HEK293T (cell line): ENCODE measurements at regions of chr3 and their contacts with region 1.

Region 1: GRCh38 chr3:136752422-136753325 is 496 bp upstream of the STAG1 start:
- DNase-seq: peak; percentile 91

Region 2: GRCh38 chr3:136390574-136390973 is 362.1 kb before region 1 on chr3:
- CTCF ChIA-PET with region 1: interaction called, 27 read pairs
- POLR2A ChIA-PET with region 1: interaction called, 17 read pairs
- DNase-seq: no peak

Region 3: GRCh38 chr3:136545664-136546268 is 206.9 kb before region 1 on chr3:
- CTCF ChIA-PET with region 1: interaction called, 15 read pairs
- POLR2A ChIA-PET with region 1: interaction called, 36 read pairs
- DNase-seq: no peak

Region 4: DNA sequence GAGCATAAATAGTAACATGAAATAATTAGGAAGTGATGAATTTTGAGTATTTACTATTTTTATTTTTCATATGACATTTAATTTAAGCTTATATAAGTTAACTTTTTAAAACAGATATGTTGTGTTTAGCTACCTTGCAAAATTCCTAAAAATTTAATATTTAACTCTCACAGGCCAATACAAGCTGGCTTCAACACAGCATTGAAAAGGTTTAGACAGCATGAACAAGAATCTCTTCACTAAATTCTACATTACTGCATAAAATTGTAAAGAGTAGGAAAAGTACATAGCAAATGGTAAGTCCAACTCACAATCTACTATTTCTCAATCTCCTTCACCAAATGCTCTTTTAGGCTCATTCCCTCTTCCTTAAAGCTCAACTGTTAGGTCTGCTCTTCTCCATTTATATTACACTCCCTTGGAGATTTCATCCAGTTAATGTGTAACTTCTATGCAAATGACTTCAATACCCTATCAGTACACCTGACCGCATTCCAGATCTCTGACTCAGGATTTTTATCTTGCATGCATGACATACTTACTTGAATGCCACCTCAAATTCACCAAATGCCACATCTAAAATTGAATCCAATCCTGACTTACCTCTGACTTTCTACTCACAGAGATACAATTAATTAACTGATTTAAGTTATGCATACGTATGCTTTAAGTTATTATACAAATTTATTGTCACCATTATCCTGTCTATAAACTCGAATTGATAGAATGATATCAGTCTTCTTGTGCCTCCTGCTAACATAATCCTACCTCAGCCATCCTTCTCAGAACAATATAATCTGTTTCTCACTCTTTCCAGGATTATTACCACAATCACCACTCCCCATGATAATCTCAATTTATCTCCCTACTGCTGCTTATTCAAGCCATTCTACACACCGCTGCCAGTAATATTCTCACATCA is 127.5 kb before region 1 on chr3:
- CTCF ChIA-PET with region 1: no interaction called
- POLR2A ChIA-PET with region 1: no interaction called
- DNase-seq: no peak

Region 5: DNA sequence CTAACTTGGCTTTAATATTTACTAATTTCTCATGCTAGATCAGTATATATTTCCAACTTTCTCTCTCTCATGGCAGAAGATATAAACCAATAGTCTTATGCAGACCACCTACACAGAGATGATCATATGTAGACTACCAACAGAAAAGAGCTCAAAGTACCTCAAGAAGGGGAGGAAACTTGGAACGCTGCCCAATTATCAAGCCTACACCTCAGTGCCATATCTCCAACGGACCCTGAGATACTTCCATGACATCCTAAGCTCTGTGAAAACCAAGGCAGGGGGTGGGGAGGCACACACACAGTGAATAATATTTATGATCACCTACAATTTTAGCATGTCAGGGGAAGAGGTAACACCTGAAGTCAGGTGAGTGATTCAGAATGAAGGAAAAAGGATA is 101.1 kb before region 1 on chr3:
- CTCF ChIA-PET with region 1: no interaction called
- POLR2A ChIA-PET with region 1: no interaction called
- DNase-seq: no peak

Region 6: GRCh38 chr3:136714020-136714419 is 38.7 kb before region 1 on chr3:
- CTCF ChIA-PET with region 1: no interaction called
- POLR2A ChIA-PET with region 1: no interaction called
- DNase-seq: no peak

Region 7: GRCh38 chr3:136730595-136731273 is 21.9 kb before region 1 on chr3:
- CTCF ChIA-PET with region 1: interaction called, 4 read pairs
- POLR2A ChIA-PET with region 1: interaction called, 10 read pairs
- DNase-seq: no peak

Region 8: GRCh38 chr3:136741063-136741462 is 11.6 kb before region 1 on chr3:
- CTCF ChIA-PET with region 1: interaction called, 13 read pairs
- POLR2A ChIA-PET with region 1: interaction called, 11 read pairs
- DNase-seq: no peak

Region 9: DNA sequence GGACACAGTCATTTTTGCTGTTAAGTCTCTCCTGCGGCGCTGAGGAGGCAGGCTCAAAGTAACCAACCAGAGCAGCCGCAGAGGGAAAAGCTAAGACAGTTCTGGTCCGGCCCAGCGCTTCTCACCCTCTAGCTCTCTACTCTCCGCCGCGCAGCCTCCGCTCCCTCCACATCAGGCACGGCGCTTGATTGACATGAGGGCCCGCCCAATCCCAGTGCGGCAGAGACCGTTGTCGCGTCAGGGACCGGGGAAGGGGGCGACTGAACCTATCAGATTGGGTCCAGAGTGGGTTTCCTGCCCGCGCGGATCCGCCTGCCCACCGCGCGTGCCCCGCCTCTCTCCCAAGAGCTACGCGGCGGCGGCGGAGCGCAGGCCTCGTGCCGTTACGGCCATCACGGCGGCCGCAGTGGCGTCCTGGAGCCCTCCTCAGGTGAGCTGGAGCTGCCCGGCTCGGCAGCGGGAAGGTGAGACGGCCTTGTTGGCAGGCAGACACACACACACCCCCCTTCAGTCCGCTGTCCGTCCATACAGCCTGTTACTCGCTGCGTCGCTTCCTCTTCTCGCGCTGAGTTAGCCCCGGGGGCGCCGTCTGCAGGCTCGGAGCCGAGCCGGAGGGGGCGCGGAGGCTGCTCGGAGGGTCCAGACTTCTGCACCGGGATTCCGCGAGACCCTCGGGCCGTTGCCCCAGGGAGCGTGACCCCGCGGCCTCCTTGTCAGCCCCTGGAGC is 109.4 kb after region 1 on chr3 and contains the start of gene NCK1:
- CTCF ChIA-PET with region 1: interaction called, 7 read pairs
- POLR2A ChIA-PET with region 1: interaction called, 34 read pairs
- DNase-seq: peak; percentile 94

Region 10: DNA sequence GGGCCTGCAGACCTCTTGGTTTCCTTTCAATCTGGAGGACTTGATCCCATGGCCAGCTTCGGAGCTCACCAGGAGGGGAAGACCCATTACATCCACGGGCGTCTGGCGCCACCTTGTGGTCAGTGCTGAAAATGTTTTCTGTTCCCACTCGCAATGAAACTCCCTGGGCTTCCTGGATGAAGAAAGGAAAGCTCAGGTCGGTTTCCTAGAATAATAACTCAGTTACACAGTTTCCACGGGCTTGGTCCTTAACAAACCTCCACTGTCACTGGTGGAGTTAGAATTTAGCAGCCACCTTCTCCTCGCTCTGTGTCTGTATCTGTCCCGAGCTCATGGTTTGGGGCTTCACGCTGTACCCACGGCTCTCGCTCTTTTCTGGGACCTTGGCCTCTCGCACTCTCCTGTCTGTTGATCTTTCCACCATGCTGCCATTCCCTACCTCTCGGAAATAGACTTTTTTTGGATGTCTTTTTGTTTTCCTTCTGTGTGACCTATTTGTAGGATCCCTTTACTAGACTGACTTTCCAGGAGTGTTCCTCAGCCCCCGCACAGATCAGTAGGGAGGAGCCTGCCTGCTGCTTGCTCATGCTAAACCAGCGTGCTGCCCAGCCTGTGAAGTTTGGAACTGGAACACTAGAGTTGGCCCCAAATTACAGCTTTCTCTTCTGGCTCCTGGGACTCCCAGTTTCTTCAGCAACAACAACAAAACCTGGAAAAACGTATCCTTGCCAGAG is 261.4 kb after region 1 on chr3:
- CTCF ChIA-PET with region 1: interaction called, 28 read pairs
- POLR2A ChIA-PET with region 1: interaction called, 34 read pairs
- DNase-seq: peak; percentile 83

Region 11: DNA sequence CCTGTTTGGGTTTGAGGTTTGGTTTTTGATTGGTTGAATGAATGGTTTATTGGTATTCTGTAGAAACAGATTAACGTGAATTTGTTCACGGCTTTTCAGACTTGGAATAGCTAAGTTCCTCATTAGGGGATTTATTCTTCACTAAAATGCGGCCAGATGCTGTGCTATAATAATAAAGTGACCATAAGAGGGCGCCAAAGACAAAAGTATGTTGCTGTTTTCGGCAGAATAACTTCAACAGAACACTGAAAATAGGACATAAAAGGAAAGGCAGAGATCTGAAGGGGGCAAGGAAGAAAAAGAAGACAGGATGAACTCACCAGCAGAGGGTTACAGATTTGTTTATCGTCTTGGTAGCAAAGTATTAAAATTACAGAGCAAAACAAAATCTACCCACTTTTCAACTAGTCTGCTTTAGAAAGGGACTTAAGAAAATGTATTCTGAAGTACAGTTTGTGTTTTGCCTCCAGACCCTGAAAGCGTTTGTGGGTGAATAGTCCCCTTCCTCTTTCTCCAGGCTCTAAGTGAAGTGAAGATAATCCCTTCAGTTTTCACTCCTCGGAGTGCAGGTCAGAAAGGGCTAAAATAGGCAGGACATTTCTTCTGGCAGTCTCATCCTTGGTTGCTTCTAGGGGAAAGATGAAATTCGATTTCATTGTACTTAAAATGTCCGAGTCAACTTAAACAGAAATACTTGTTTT is 352.8 kb after region 1 on chr3:
- CTCF ChIA-PET with region 1: no interaction called
- POLR2A ChIA-PET with region 1: no interaction called
- DNase-seq: peak; percentile 51